ENCODE measurements at regions of chr2 and their contacts with region 1.

Region 1: GRCh38 chr2:18749912-18750526 is 160.7 kb upstream of the NT5C1B start:
- DNase-seq: no peak
- H3K4me3 ChIP-seq: no peak overlapping the region
- H3K27ac ChIP-seq: no peak overlapping the region
- H3K4me1 ChIP-seq: no peaks in the 10 kb centered on the region
- H3K27me3 ChIP-seq: no peaks in the 10 kb centered on the region
- CTCF ChIP-seq: peak in 10 of 11 experiments; percentile 17 to 63 (median 54)
- POLR2A ChIP-seq: no peak

Region 2: DNA sequence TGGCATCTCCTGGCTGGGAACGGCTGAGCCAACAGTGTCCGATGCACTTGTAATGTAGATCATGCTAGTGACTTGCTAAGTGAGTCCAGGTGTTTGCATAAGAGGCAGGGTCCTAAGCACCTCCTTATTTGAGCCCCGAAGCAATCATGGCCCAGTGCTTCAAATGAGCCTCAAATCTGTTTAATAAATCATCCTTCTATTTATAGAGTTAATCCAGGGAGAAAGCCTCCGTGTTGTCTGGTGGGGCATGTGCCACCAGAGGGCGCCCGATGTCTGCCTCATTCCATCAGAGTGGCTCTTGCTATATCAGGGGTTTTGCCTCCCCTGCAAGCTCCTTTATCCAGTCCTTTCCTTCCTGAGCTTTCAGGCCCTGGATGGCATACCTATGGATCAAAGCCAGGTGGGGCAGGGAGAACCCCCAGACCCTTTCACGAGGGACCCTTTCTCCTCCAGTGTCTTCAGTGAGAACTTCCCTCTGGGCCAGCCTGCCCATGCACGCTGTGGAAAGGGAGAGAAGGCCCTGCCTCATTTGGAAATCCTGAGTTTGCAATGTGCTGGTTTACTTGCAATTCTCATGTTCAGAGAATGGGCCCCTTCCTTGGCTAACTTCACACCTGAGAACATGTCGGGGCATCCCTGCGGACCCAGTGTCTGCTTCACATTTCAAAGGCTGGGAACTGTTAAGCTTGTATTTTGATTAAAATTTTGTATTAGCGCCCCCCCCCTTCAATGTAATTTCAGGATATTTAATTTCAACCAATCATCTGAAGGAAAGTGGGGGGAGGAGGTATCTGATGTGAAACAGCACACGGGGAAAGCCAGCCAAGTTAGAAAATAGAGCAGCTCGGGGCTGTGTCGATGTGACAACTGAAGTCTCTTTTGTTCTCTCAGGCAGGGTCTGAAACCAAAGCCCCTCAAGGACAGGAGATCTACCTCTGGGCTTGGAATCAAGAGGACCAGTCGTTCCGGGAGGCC is 229.3 kb before region 1 on chr2:
- intact Hi-C with region 1: loop called (anchors 10 kb)
- DNase-seq: peak; percentile 87
- H3K4me3 ChIP-seq: no peak overlapping the region
- H3K27ac ChIP-seq: no peak overlapping the region
- H3K4me1 ChIP-seq: no peaks in the 10 kb centered on the region
- H3K27me3 ChIP-seq: peaks cover 0 to 36% (median 0%) of the 10 kb centered on the region in 7 donors
- CTCF ChIP-seq: peak; percentile 72 to 88 (median 77)
- POLR2A ChIP-seq: no peak

Region 3: GRCh38 chr2:18961991-18962421 is 212.0 kb after region 1 on chr2:
- intact Hi-C with region 1: no loop called
- DNase-seq: no peak
- H3K4me3 ChIP-seq: no peak overlapping the region
- H3K27ac ChIP-seq: no peak overlapping the region
- H3K4me1 ChIP-seq: no peaks in the 10 kb centered on the region
- H3K27me3 ChIP-seq: no peaks in the 10 kb centered on the region
- CTCF ChIP-seq: no peak
- POLR2A ChIP-seq: no peak